Heart left ventricle (tissue), 16 donors: ENCODE measurements at regions of chr15 and their contacts with region 1.

Region 1: DNA sequence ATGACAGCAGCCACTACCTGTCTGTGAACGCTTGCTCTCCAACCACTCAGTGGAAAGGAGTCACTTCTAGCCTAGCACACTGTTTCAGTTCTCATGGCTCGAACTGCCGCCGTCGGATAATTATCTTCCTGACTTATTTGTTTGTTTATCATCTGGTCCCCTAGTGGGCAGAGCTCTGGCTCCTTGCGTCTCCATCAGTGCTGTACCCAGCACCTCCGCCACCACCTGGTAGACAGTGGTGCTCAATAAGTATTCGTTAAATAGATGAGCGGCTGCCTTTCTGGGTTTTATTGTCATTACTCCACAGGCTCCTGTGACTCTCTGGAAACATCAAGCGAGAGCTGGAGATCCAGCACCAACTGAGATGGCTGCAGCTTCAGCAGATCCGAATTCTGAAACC is 297.5 kb downstream of the NTRK3 start:
- DNase-seq: no peak
- ATAC-seq: no peak
- H3K4me3 ChIP-seq: no peak overlapping the region
- H3K27ac ChIP-seq: no peak overlapping the region
- H3K4me1 ChIP-seq: peaks cover 0 to 10% (median 0%) of the 10 kb centered on the region in 12 donors
- H3K27me3 ChIP-seq: peaks cover 0 to 6% (median 0%) of the 10 kb centered on the region in 9 donors
- CTCF ChIP-seq: no peak
- POLR2A ChIP-seq: no peak

Region 2: DNA sequence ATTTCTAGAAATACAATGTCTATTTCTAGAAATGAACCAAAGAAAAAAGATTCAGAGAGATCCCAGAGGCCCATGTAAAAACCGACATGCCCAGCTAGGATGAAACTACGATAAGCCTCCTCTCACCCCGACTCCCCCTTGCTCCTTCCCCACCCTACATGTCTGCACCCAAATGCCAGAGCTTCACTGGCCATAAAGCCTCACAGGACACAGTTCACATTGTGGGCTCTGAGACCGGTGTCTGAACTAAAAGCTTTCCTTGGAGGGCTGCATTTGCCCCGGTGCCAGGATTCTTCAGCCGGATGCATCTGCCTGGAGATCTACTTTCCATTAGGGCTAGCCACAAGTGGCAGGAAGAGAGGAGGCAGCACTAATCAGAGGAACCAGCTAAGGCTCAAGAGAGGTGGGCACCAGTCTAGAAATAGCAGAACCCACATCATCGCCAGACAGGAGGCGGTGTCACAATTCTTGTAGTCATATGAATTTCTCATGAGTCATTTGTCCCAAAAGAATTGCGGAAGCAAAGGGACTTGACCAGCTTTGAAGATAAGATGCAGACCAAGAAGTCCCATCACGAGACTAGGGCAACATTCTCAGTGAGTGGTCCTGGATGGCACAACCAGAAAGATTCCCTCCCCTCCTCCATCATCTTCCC is 56.2 kb before region 1 on chr15:
- intact Hi-C with region 1: loop called in 1 of 10 experiments (anchors 2 kb)
- DNase-seq: peak in 1 of 5 donors; percentile 8
- ATAC-seq: peak in 1 of 4 donors; percentile 57
- H3K4me3 ChIP-seq: no peak overlapping the region
- H3K27ac ChIP-seq: peak overlapping the region in 2 of 12 donors; percentile 17 to 20
- H3K4me1 ChIP-seq: no peaks in the 10 kb centered on the region
- H3K27me3 ChIP-seq: no peaks in the 10 kb centered on the region
- CTCF ChIP-seq: no peak
- POLR2A ChIP-seq: no peak

Region 3: GRCh38 chr15:88018856-88019641 is 60.0 kb after region 1 on chr15:
- intact Hi-C with region 1: loop called in 1 of 10 experiments (anchors 10 kb)
- DNase-seq: no peak
- ATAC-seq: no peak
- H3K4me3 ChIP-seq: no peak overlapping the region
- H3K27ac ChIP-seq: no peak overlapping the region
- H3K4me1 ChIP-seq: no peaks in the 10 kb centered on the region
- H3K27me3 ChIP-seq: no peaks in the 10 kb centered on the region
- CTCF ChIP-seq: no peak
- POLR2A ChIP-seq: no peak

Region 4: DNA sequence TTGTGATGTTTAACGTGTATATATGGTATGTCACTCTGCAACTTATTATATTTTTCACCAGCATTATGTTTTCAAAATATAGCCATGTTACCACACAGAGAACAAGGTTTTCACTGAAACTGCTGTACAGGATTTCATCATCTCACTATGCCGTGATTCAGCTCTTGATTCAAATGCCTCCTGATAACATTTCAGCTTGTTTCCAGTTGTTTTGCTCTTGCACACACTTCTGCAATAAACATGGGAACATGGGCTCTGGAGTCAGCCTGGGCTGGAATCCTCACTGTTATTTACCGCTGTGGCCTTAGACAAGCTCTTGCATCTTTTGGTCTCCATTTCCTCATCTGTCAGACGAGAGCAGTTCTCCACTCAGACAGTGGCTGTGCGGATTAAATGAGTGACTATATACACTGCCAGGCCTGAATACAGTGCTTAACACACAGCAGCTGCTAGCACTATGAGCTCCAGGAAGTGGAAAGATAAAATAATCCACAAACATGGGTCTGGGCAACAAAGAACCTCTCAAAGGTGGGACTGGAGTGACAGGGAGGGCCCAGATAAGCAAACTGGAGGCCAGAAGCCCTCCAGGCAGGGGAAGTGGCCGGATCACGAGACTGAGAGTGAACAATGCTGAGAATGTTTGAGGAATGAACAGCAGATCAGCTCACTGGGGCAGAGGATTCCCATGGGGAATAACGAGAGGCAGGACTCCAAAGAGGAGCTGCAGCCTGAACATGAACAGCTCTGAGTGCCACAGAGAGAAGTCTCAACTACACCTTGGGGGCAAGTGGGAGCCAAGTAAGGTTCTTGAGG is 279.7 kb after region 1 on chr15:
- intact Hi-C with region 1: loop called in 1 of 10 experiments (anchors 10 kb)
- DNase-seq: no peak
- ATAC-seq: peak in 2 of 4 donors; percentile 16 to 29
- H3K4me3 ChIP-seq: no peak overlapping the region
- H3K27ac ChIP-seq: no peak overlapping the region
- H3K4me1 ChIP-seq: no peaks in the 10 kb centered on the region
- H3K27me3 ChIP-seq: no peaks in the 10 kb centered on the region
- CTCF ChIP-seq: no peak
- POLR2A ChIP-seq: no peak